ENCODE measurements at regions of chr3 and their contacts with region 1.

Region 1: DNA sequence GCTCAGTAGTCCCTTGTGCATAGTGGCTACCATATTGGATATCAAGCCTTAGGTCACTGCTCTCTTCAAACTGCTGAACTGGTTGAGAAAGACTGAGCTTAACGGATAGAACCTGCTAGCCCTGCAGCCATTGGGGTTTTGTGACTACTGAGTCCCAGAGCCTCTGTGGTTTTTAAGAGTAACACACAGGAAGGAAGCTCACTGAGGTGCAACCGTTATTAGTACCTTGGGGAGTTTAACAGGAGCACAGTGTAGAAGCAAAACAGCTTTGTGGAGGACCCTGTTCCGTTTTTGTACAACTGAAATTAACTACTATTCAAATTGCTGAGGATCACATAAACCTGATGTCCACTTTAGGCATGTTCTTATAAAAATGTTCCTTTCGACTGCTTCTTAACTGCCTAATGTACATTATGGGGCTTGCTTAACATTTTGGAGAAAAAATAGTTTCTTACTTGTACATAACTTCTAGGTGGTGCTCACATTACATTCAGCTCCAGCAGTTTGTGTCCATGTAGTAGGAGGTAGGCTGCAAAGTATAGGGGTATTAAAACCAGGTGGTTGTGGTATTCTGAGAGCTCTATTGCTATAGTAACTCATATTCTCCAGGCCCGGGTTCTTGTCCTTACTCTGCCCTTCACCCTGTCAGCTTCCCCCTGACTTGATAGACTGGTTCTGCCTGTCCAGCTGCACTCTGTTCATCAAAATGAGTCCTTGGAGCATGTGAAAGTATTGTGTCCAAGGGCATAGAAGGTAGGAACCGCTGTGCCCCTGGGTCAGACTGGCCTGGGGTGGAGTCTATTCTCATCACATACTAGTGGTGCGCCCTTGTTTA is 17.3 kb downstream of the PXK start:
- DNase-seq: peak in 1 of 3 donors; percentile 29
- H3K4me3 ChIP-seq: peak overlapping the region in 2 of 7 experiments; percentile 5 to 33
- H3K27ac ChIP-seq: peak overlapping the region in 1 of 2 experiments; percentile 25
- H3K4me1 ChIP-seq: peaks cover 24 to 71% (median 50%) of the 10 kb centered on the region in 4 experiments
- H3K27me3 ChIP-seq: no peaks in the 10 kb centered on the region

Region 2: GRCh38 chr3:58249358-58250092 is 100.5 kb before region 1 on chr3:
- CTCF ChIA-PET with region 1: no interaction called
- POLR2A ChIA-PET with region 1: no interaction called
- DNase-seq: no peak
- H3K4me3 ChIP-seq: no peak overlapping the region
- H3K27ac ChIP-seq: no peak overlapping the region
- H3K4me1 ChIP-seq: no peaks in the 10 kb centered on the region
- H3K27me3 ChIP-seq: no peaks in the 10 kb centered on the region

Region 3: DNA sequence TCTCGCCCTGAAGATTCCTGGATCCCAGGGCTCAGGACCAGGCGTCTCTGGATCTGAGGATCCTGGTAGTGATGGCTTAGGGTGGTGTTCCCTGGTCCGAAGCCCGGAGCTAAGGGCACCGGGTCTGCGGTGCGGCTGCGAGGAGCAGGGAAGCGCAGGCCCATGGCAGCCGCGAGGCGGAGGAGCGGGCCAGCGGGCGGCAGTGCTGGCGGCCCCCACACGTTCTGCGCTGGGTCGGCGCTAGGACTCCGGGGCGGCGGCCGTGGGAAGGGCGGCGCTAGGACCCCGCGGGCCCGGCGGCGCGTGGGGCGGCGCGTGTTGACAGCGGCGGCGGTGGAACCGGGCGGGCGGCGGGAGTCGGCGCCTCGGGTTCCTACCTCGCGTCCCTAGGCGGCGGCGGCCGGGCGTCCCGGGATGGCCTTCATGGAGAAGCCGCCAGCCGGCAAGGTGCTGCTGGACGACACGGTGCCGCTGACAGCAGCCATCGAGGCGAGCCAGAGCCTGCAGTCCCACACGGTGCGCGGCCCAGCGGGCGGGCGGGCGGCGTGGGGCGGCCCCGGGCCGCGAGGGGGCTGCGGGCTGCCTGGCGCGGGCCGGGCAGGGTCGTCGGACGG is 17.3 kb before region 1 on chr3 and contains the start of gene PXK:
- CTCF ChIA-PET with region 1: interaction called, 37 read pairs
- POLR2A ChIA-PET with region 1: interaction called, 6 read pairs
- DNase-seq: peak; percentile 78 to 93 (median 87)
- H3K4me3 ChIP-seq: peak within 1 kb of the TSS; percentile 58 to 96 (median 85)
- H3K27ac ChIP-seq: peak within 1 kb of the TSS in 1 of 2 experiments; percentile 76
- H3K4me1 ChIP-seq: peaks cover 11 to 42% (median 34%) of the 10 kb centered on the region in 4 experiments
- H3K27me3 ChIP-seq: no peaks in the 10 kb centered on the region

Region 4: GRCh38 chr3:58452176-58452575 is 102.2 kb after region 1 on chr3:
- CTCF ChIA-PET with region 1: no interaction called
- POLR2A ChIA-PET with region 1: no interaction called
- DNase-seq: no peak
- H3K4me3 ChIP-seq: no peak overlapping the region
- H3K27ac ChIP-seq: no peak overlapping the region
- H3K4me1 ChIP-seq: no peaks in the 10 kb centered on the region
- H3K27me3 ChIP-seq: no peaks in the 10 kb centered on the region

Region 5: GRCh38 chr3:59290358-59290757 is 940.3 kb after region 1 on chr3:
- CTCF ChIA-PET with region 1: no interaction called
- POLR2A ChIA-PET with region 1: no interaction called
- DNase-seq: no peak
- H3K4me3 ChIP-seq: no peak overlapping the region
- H3K27ac ChIP-seq: no peak overlapping the region
- H3K4me1 ChIP-seq: peaks cover 0 to 4% (median 0%) of the 10 kb centered on the region in 4 experiments
- H3K27me3 ChIP-seq: no peaks in the 10 kb centered on the region

Measured in common myeloid progenitor, CD34-positive (primary cell).